ENCODE measurements at regions of chr3 and their contacts with region 1.

Region 1: GRCh38 chr3:59386165-59386564 is 336.3 kb upstream of the CFAP20DC start:
- DNase-seq: no peak
- H3K4me3 Mint-ChIP-seq: no peak overlapping the region
- H3K27ac Mint-ChIP-seq: peak overlapping the region; percentile 89
- H3K4me1 Mint-ChIP-seq: peaks cover 84% of the 10 kb centered on the region
- H3K27me3 Mint-ChIP-seq: no peaks in the 10 kb centered on the region

Region 2: GRCh38 chr3:59286791-59287531 is 99.2 kb before region 1 on chr3:
- intact Hi-C with region 1: loop called (anchors 2 kb)
- DNase-seq: peak; percentile 9
- H3K4me3 Mint-ChIP-seq: no peak overlapping the region
- H3K27ac Mint-ChIP-seq: peak overlapping the region; percentile 86
- H3K4me1 Mint-ChIP-seq: peaks cover 20% of the 10 kb centered on the region
- H3K27me3 Mint-ChIP-seq: peaks cover 4% of the 10 kb centered on the region

Region 3: GRCh38 chr3:59450946-59451763 is 65.0 kb after region 1 on chr3:
- intact Hi-C with region 1: loop called (anchors 1 kb)
- DNase-seq: peak; percentile 73
- H3K4me3 Mint-ChIP-seq: peak overlapping the region; percentile 34
- H3K27ac Mint-ChIP-seq: peak overlapping the region; percentile 85
- H3K4me1 Mint-ChIP-seq: peaks cover 61% of the 10 kb centered on the region
- H3K27me3 Mint-ChIP-seq: no peaks in the 10 kb centered on the region

Region 4: GRCh38 chr3:59759298-59760031 is 373.3 kb after region 1 on chr3:
- intact Hi-C with region 1: loop called (anchors 5 kb)
- DNase-seq: no peak
- H3K4me3 Mint-ChIP-seq: no peak overlapping the region
- H3K27ac Mint-ChIP-seq: peak overlapping the region; percentile 9
- H3K4me1 Mint-ChIP-seq: peaks cover 71% of the 10 kb centered on the region
- H3K27me3 Mint-ChIP-seq: no peaks in the 10 kb centered on the region

Region 5: GRCh38 chr3:60081381-60082095 is 695.4 kb after region 1 on chr3:
- intact Hi-C with region 1: loop called (anchors 5 kb)
- DNase-seq: no peak
- H3K4me3 Mint-ChIP-seq: peak overlapping the region; percentile 69
- H3K27ac Mint-ChIP-seq: peak overlapping the region; percentile 86
- H3K4me1 Mint-ChIP-seq: peaks cover 67% of the 10 kb centered on the region
- H3K27me3 Mint-ChIP-seq: no peaks in the 10 kb centered on the region

Measured in activated T-helper 2 cell treated with anti-CD3 and anti-CD28 coated beads, Interferon-gamma antibody, Interleukin-2, Interleukin-4, amounts not matched to agents 10 μg/mL and 5 μg/mL and 100 μg/mL, durations not matched to agents 14 hours and 24 hours and 36 hours (primary cell).